OCI-LY7 (cell line): ENCODE measurements at regions of chr5 and their contacts with region 1.

Region 1: DNA sequence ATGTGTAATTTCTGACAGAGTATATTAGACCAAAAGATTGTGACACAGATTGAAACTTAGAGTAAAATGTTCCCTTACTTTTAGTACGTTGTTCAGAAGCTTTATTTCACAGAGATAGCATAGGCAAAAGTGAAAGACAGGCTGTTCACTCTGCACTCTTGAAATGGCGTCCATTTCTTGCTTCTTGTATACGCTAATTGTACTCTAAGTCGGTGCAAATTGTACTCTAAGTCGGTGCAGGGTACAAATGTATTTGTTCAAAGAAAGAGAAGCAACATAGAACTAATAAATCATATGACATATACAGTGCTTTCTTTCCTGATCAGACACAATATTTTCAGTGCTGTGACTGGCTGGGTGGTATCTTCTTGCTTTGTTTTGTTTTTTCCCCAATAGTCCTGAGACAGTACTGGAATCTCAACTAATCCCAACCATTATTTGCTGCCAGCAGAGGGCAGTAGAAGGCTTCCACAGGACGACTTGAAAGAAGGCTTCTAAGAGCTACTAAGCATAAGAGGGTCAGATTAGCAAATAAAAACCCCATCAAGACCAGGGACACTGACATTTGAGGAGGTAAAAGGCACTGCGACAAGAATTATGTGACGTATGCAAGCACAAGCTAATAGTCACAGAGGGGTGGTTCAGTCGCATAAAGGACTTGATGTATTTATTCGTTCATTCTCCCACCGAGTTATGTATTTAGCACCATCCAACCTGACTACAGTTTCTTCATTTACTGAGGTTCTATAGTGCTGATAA is 831.8 kb downstream of the TAF11L14 start:
- DNase-seq: peak; percentile 63
- H3K4me3 ChIP-seq: no peak overlapping the region
- H3K27ac ChIP-seq: no peak overlapping the region
- H3K4me1 ChIP-seq: no peaks in the 10 kb centered on the region
- CTCF ChIP-seq: peak; percentile 90

Region 2: GRCh38 chr5:18699681-18700080 is 233.7 kb after region 1 on chr5:
- CTCF ChIA-PET with region 1: no interaction called
- POLR2A ChIA-PET with region 1: no interaction called
- intact Hi-C with region 1: loop called (anchors 2 kb)
- DNase-seq: no peak
- H3K4me3 ChIP-seq: no peak overlapping the region
- H3K27ac ChIP-seq: no peak overlapping the region
- H3K4me1 ChIP-seq: peaks cover 13% of the 10 kb centered on the region
- CTCF ChIP-seq: no peak

Region 3: DNA sequence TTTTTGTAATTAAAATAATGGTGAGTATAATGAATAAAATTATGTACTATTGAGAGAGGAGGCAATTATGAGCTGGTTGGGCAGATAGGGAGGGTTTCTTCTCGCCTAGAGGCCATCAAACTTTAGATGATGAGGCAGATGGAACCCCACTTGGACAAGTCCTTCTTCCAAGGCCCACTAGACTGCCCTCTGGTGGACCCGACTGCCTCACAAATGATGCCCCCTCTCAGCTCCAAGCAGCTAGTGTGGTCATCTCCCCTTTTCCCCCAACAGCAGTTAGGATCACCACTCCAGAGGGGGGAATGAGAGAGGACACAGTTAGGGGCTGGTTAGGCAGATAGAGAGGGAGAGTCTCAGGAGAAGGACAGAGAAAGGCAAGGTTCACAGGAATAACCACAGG is 1870.0 kb after region 1 on chr5:
- CTCF ChIA-PET with region 1: no interaction called
- POLR2A ChIA-PET with region 1: no interaction called
- intact Hi-C with region 1: no loop called
- DNase-seq: no peak
- H3K4me3 ChIP-seq: no peak overlapping the region
- H3K27ac ChIP-seq: no peak overlapping the region
- H3K4me1 ChIP-seq: no peaks in the 10 kb centered on the region
- CTCF ChIP-seq: no peak